Caco-2 (cell line): ENCODE measurements at regions of chr14 and their contacts with region 1.

Region 1: DNA sequence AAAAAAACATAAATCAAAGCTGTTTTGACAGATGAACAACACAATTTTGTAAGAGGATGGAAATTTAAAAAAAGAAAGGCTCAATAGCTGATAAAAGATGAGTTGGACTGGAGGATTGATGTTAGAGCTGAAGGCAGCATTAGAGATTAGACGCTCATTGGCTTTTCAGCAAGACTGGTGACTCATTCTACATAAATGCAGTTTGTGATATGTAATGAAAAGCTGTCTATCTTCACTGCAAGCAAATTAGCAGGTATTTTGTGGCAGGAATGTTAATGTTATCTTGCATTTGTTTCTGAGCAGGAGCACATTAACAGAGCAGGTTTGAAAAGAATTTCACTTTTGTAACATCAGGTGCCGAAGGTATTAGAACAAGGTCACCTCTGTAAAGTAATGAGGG is 442.7 kb upstream of the NOVA1 start:
- DNase-seq: peak in 1 of 2 experiments; percentile 16
- H3K4me3 ChIP-seq: no peak overlapping the region
- H3K4me3 Mint-ChIP-seq: peak overlapping the region; percentile 35
- H3K27ac Mint-ChIP-seq: peak overlapping the region; percentile 57
- H3K4me1 ChIP-seq: peaks cover 16% of the 10 kb centered on the region; the same call in 1 of the 2 replicates
- H3K4me1 Mint-ChIP-seq: peaks cover 19% of the 10 kb centered on the region
- H3K27me3 ChIP-seq: no peaks in the 10 kb centered on the region
- H3K27me3 Mint-ChIP-seq: no peaks in the 10 kb centered on the region
- CTCF ChIP-seq: no peak

Region 2: GRCh38 chr14:26947265-26947664 is 93.3 kb before region 1 on chr14:
- CTCF ChIA-PET with region 1: no interaction called
- POLR2A ChIA-PET with region 1: no interaction called
- intact Hi-C with region 1: no loop called
- DNase-seq: no peak
- H3K4me3 ChIP-seq: no peak overlapping the region
- H3K4me3 Mint-ChIP-seq: no peak overlapping the region
- H3K27ac Mint-ChIP-seq: no peak overlapping the region
- H3K4me1 ChIP-seq: no peaks in the 10 kb centered on the region
- H3K4me1 Mint-ChIP-seq: no peaks in the 10 kb centered on the region
- H3K27me3 ChIP-seq: no peaks in the 10 kb centered on the region
- H3K27me3 Mint-ChIP-seq: no peaks in the 10 kb centered on the region
- CTCF ChIP-seq: no peak

Region 3: DNA sequence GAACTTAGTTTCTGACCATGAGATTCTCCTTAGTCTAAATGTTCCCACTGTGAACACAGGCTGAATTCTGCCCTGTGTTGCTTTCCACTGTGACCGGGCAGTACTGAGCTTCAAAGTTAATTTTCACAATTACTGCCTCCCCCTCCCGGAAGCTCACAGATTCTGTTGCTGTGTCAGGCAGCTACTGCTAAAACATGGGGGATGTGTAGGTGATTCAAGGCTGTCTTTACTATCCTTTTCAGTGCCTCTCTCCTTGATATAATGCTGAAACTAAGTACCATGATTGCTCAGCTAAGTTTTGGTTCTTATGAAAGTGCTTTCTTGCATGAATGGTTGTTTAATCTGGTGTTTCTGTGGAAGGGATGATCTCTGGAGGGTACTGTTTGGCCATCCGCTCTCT is 14.5 kb before region 1 on chr14:
- CTCF ChIA-PET with region 1: no interaction called
- POLR2A ChIA-PET with region 1: no interaction called
- intact Hi-C with region 1: no loop called
- DNase-seq: no peak
- H3K4me3 ChIP-seq: no peak overlapping the region
- H3K4me3 Mint-ChIP-seq: no peak overlapping the region
- H3K27ac Mint-ChIP-seq: no peak overlapping the region
- H3K4me1 ChIP-seq: no peaks in the 10 kb centered on the region
- H3K4me1 Mint-ChIP-seq: no peaks in the 10 kb centered on the region
- H3K27me3 ChIP-seq: no peaks in the 10 kb centered on the region
- H3K27me3 Mint-ChIP-seq: peaks cover 4% of the 10 kb centered on the region
- CTCF ChIP-seq: no peak

Region 4: DNA sequence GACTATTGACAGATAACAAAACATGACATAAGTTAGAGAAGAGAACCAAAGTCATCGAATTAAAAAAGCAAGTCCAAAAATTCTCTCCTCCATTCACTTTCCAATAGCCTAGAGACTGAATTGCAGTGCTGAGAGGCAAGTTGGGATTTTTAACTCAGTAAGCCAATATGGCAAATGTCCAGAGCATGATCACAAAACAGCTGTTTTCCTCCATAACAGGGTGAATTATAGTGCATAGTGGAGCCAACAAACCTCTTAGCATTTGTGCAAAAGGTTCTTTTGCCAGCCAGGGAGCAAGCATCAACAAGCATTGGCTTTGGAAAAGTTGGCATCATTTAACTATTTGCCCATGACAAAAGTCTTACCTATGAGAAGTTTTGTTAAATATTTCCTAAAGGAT is 16.0 kb after region 1 on chr14:
- CTCF ChIA-PET with region 1: no interaction called
- POLR2A ChIA-PET with region 1: no interaction called
- intact Hi-C with region 1: loop called (anchors 2 kb)
- DNase-seq: no peak
- H3K4me3 ChIP-seq: no peak overlapping the region
- H3K4me3 Mint-ChIP-seq: no peak overlapping the region
- H3K27ac Mint-ChIP-seq: no peak overlapping the region
- H3K4me1 ChIP-seq: peaks cover 18% of the 10 kb centered on the region; the same call in 1 of the 2 replicates
- H3K4me1 Mint-ChIP-seq: no peaks in the 10 kb centered on the region
- H3K27me3 ChIP-seq: no peaks in the 10 kb centered on the region
- H3K27me3 Mint-ChIP-seq: no peaks in the 10 kb centered on the region
- CTCF ChIP-seq: no peak